ENCODE measurements at regions of chr6 and their contacts with region 1.

Region 1: GRCh38 chr6:144013486-144013909 is 5.4 kb upstream of the PLAGL1 start:
- DNase-seq: peak; percentile 76 to 87 (median 81)
- H3K4me3 ChIP-seq: no peak overlapping the region
- H3K27ac ChIP-seq: no peak overlapping the region
- H3K4me1 ChIP-seq: no peaks in the 10 kb centered on the region
- H3K27me3 ChIP-seq: no peaks in the 10 kb centered on the region

Region 2: GRCh38 chr6:143575440-143575839 is 438.1 kb before region 1 on chr6:
- CTCF ChIA-PET with region 1: interaction called, 56 read pairs
- POLR2A ChIA-PET with region 1: interaction called, 3 read pairs
- DNase-seq: peak; percentile 82 to 90 (median 89)
- H3K4me3 ChIP-seq: no peak overlapping the region
- H3K27ac ChIP-seq: no peak overlapping the region
- H3K4me1 ChIP-seq: no peaks in the 10 kb centered on the region
- H3K27me3 ChIP-seq: no peaks in the 10 kb centered on the region

Region 3: DNA sequence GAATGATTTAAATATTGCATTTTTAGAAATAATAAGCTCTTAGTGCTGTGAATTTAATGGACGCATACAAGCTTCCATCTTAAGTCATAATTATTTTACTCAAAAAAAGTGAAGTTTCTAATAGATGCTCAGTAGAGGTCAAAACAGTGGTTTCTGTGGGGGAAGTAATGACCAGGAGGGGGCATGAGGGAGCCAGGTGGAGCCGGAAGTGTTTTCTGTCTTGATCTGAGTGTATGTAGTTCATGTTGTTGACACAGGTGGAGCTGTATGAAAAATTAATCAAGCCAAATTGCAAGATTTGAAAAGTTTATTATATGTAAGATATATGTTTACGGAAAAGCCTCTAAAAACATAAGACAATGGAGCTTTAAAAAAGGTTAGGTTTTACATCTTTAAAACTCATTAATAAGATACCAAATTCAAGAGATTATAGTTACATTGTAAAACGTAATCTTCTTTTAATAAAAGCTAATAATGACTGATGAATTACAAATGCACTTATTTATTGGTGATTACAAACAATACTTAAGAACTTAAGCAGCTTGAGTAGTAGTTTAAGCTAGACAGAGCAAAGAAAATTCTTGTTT is 73.4 kb before region 1 on chr6:
- CTCF ChIA-PET with region 1: interaction called, 167 read pairs
- POLR2A ChIA-PET with region 1: no interaction called
- DNase-seq: peak; percentile 78 to 87 (median 86)
- H3K4me3 ChIP-seq: no peak overlapping the region
- H3K27ac ChIP-seq: no peak overlapping the region
- H3K4me1 ChIP-seq: peaks cover 0 to 14% (median 2%) of the 10 kb centered on the region in 4 experiments
- H3K27me3 ChIP-seq: no peaks in the 10 kb centered on the region

Region 4: DNA sequence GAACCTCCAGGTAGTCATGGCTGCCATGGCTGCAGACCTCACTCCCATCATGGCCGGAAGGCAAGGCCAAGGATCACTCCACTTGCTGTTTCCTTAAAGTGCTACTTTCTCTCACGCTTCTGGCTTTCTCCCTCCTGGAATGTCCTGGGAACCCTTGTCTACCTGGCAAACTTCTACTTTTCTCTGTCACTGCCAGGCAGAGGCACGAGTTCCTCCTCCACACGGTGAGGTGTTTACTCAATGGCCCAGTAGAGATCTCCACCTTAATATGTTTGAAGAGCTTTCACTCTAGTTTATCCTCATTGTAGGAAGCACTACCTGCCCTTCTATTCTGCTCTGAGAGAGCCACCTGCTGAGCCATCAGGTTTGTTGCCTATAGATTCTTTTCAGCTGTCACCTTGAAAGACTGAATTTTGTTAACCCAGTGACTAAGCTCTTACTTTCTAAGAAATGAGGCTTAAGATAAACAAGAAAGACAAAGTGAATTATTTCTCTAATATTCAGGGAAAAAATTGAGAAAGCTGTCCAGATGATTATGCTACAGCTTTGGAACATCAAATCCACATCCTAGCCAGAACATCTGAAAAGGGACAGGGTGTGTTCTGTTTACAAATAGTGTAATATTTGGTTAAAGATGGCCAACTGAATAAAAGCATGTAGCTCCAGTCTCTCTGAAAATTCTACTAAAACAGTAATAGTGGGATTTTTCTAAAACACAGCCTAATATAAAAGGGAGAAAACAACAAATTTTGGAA is 60.4 kb before region 1 on chr6:
- CTCF ChIA-PET with region 1: interaction called, 11 read pairs
- POLR2A ChIA-PET with region 1: no interaction called
- DNase-seq: no peak
- H3K4me3 ChIP-seq: no peak overlapping the region
- H3K27ac ChIP-seq: no peak overlapping the region
- H3K4me1 ChIP-seq: no peaks in the 10 kb centered on the region
- H3K27me3 ChIP-seq: no peaks in the 10 kb centered on the region

Region 5: GRCh38 chr6:143961886-143962873 is 51.3 kb before region 1 on chr6:
- CTCF ChIA-PET with region 1: interaction called, 10 read pairs
- POLR2A ChIA-PET with region 1: no interaction called
- DNase-seq: no peak
- H3K4me3 ChIP-seq: no peak overlapping the region
- H3K27ac ChIP-seq: no peak overlapping the region
- H3K4me1 ChIP-seq: peaks cover 0 to 32% (median 11%) of the 10 kb centered on the region in 4 experiments
- H3K27me3 ChIP-seq: no peaks in the 10 kb centered on the region

Region 6: DNA sequence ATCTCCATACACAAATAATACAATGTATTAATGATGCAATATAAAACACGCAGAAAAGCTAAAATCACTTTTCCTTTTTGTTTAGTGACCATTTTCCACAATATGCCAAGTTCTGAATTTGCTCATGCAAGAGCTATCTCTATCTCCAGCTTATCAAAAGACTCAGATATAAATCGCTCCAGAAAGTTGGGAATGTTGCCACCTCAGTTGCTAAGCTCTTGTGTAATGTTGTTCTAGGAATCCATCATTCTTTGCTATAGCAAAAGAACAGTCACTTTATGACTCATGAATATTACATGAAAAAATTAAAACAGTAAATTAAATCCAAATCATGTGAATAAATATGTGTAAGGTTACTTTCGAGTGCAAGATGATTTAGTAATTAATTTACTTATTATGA is 14.1 kb before region 1 on chr6:
- CTCF ChIA-PET with region 1: interaction called, 22 read pairs
- POLR2A ChIA-PET with region 1: no interaction called
- DNase-seq: no peak
- H3K4me3 ChIP-seq: no peak overlapping the region
- H3K27ac ChIP-seq: no peak overlapping the region
- H3K4me1 ChIP-seq: no peaks in the 10 kb centered on the region
- H3K27me3 ChIP-seq: no peaks in the 10 kb centered on the region

Region 7: DNA sequence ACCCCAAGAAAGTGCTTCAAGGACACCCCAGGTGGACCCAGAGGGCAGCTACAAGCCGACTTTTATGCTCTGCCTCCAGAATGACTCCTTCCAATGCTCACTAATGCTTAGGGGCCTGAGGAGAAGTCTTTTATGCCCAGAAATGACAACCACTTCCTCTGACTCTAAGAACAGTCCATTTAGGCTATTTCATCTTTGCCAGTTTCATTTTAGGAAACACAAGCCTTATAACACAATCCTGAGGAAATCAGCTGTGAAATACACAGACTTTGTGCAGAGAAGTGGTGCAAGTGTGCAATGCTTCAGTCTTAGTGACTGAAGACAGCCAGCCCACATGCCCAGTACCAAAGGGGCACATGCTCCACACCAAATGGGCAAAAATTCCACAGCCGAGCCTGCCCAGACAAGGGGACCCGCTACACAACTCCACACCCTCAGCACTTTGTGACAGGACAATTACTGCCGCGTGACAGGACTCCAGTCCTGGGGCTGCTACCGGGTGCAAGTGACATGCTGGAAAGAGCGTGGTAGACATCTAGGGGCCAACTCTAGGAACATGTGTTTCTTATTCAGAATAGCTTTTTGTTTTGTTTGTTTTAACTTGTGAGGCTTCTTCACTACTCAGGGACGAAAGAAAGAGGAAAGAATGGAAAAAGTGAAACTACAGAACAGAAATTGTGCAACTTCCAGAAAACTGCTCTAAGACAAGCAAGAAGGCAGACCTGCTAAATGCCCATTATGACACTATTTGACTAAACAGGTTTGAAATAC is 22.8 kb after region 1 on chr6:
- CTCF ChIA-PET with region 1: interaction called, 11 read pairs
- POLR2A ChIA-PET with region 1: interaction called, 3 read pairs
- DNase-seq: peak; percentile 49 to 77 (median 72)
- H3K4me3 ChIP-seq: peak overlapping the region in 6 of 7 experiments; percentile 24 to 75 (median 64)
- H3K27ac ChIP-seq: peak overlapping the region; percentile 37 to 71
- H3K4me1 ChIP-seq: peaks cover 19 to 40% (median 35%) of the 10 kb centered on the region in 4 experiments
- H3K27me3 ChIP-seq: no peaks in the 10 kb centered on the region

Measured in common myeloid progenitor, CD34-positive (primary cell).